ENCODE measurements at regions of chr13 and their contacts with region 1.

Region 1: DNA sequence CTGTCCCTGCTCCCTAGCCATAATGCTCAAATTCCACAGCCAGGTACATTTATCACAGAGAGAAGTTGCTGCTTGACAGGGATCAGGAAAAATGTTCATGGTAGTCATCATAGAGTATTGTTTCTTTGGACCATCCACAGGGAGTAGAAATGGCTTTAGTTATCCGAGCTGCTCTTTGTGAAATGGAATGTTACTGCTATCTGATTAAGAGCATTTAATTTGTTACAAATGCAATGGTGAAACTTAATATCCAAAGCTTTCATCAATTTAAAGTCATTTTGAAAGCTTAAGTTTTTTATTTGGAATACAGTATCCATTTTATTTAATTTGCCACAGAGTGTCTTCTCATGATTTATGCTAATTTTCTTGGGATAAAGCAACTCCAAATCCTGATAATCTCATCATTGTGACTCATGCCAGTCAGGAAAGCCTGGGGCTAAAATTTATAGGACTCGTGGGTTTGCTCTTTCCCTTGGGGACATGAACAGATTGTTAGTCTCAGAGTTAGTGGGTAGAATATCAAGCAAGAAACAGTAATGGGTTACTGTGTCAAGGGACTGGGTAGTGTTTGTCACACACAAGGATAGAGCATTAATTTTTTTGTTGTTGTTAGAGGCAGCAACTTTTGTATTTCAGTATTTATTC is 59.8 kb downstream of the SCEL start:
- DNase-seq: no peak
- H3K4me3 ChIP-seq: no peak overlapping the region
- H3K27ac ChIP-seq: no peak overlapping the region
- H3K4me1 ChIP-seq: no peaks in the 10 kb centered on the region
- H3K27me3 ChIP-seq: peaks cover 0 to 8% of the 10 kb centered on the region in 2 experiments
- CTCF ChIP-seq: no peak
- POLR2A ChIP-seq: no peak

Region 2: GRCh38 chr13:77584106-77584505 is 11.2 kb before region 1 on chr13:
- CTCF ChIA-PET with region 1: interaction called, 10 read pairs
- POLR2A ChIA-PET with region 1: no interaction called
- dilution Hi-C with region 1: no loop called
- intact Hi-C with region 1: no loop called
- DNase-seq: no peak
- H3K4me3 ChIP-seq: no peak overlapping the region
- H3K27ac ChIP-seq: no peak overlapping the region
- H3K4me1 ChIP-seq: no peaks in the 10 kb centered on the region
- H3K27me3 ChIP-seq: no peaks in the 10 kb centered on the region
- CTCF ChIP-seq: no peak
- POLR2A ChIP-seq: no peak

Region 3: DNA sequence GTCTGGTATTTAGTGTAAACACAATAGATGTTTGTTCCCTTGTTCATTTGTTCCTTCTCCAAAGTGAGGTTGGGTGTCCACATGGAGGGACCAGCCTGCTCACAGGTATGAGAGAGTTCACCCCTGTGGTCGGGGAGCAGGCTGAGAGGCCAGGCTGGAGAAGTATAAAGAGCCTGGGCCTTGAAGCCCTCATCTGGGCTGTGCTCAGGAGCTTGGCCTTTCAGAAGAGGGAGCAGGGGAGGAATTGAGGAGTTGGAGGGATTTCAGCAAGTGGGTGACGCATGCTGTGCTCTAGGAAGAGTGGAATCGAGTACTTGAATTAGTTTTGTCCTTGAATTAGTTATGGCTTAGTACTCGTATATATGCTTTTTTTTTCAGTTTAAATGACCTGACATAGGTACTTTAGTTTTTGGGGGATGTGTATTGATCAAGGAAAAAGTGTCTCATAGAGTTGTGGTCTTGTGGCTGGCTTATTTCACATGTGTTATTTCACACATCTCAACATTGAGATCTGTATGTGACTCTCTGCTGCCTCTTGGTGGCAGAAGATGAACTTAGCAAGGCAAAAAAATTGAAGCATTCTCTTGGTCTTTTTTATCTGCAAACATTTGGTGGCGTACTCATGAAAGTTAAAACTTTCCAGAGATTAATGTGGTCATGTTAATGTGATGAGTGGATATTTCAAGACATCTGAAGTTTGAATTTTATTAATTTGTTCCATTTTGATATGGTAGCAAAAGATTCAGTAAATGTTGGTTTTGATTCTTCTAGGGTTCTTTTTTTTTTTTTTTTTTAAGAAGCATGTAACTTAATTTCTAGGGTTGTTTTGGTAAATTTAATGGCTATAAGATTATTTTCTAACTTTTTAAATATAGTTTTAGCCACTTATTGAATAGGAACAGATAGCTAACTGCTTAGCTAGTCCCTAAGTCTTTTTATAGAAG is 156.5 kb after region 1 on chr13:
- CTCF ChIA-PET with region 1: interaction called, 61 read pairs
- POLR2A ChIA-PET with region 1: no interaction called
- dilution Hi-C with region 1: no loop called
- intact Hi-C with region 1: loop called (anchors 1 kb)
- DNase-seq: peak; percentile 76
- H3K4me3 ChIP-seq: no peak overlapping the region
- H3K27ac ChIP-seq: no peak overlapping the region
- H3K4me1 ChIP-seq: peaks cover 3% of the 10 kb centered on the region
- H3K27me3 ChIP-seq: no peaks in the 10 kb centered on the region
- CTCF ChIP-seq: peak; percentile 59 to 65
- POLR2A ChIP-seq: no peak

Region 4: GRCh38 chr13:77991003-77991402 is 395.7 kb after region 1 on chr13:
- CTCF ChIA-PET with region 1: no interaction called
- POLR2A ChIA-PET with region 1: no interaction called
- dilution Hi-C with region 1: no loop called
- intact Hi-C with region 1: no loop called
- DNase-seq: no peak
- H3K4me3 ChIP-seq: no peak overlapping the region
- H3K27ac ChIP-seq: no peak overlapping the region
- H3K4me1 ChIP-seq: no peaks in the 10 kb centered on the region
- H3K27me3 ChIP-seq: no peaks in the 10 kb centered on the region
- CTCF ChIP-seq: no peak
- POLR2A ChIP-seq: no peak

Region 5: DNA sequence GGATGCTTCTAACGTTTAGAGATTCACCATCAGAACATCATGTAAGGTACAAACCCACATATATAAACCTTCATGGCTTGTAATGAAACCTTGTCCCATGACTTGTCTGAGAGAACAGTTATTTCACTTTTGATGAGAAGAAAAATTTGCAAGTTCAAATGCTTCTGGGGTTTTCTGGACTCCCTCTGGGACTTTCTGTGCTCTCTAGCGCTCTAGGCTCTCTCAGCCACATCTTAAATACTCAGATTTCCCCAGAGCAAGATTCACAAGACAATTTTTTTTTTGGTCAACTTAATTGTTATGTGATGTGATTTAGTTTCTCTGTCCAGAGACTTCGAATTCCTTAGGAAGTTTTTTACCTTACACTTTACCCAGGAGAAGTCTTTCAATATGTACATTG is 606.1 kb after region 1 on chr13:
- CTCF ChIA-PET with region 1: no interaction called
- POLR2A ChIA-PET with region 1: no interaction called
- dilution Hi-C with region 1: no loop called
- intact Hi-C with region 1: no loop called
- DNase-seq: no peak
- H3K4me3 ChIP-seq: no peak overlapping the region
- H3K27ac ChIP-seq: no peak overlapping the region
- H3K4me1 ChIP-seq: no peaks in the 10 kb centered on the region
- H3K27me3 ChIP-seq: peaks cover 2 to 3% of the 10 kb centered on the region in 2 experiments
- CTCF ChIP-seq: no peak
- POLR2A ChIP-seq: no peak

Measured in endothelial cell of umbilical vein (primary cell).